ENCODE measurements at regions of chr4 and their contacts with region 1.

Region 1: DNA sequence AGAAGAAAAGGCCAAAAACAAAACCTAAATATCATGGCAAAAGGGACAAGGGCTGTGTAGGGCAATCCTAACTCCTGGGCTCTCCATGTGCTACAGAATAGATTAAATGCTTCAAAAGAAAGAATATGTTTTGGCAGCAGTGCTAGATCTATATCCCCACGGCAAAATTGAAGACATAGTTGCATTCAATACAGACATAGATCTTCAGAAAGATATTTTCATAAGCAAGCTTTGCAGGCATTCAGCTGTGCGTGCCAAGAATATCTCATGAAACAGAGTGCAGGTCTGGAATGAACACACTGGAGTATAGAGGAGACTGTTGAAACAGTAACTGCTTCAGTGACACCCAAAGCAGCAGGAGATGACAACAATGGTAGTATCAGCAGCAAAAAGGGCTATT is 1476.9 kb downstream of the ARAP2 start:
- DNase-seq: no peak
- ATAC-seq: no peak
- H3K4me3 ChIP-seq: no peak overlapping the region
- H3K27ac ChIP-seq: no peak overlapping the region
- H3K4me1 ChIP-seq: no peaks in the 10 kb centered on the region; the same call in 1 of the 2 replicates
- H3K27me3 ChIP-seq: no peaks in the 10 kb centered on the region
- CTCF ChIP-seq: no peak

Region 2: GRCh38 chr4:34814266-34814665 is 46.9 kb after region 1 on chr4:
- CTCF ChIA-PET with region 1: no interaction called
- POLR2A ChIA-PET with region 1: no interaction called
- intact Hi-C with region 1: no loop called
- DNase-seq: peak; percentile 12
- ATAC-seq: no peak
- H3K4me3 ChIP-seq: no peak overlapping the region
- H3K27ac ChIP-seq: no peak overlapping the region
- H3K4me1 ChIP-seq: peaks cover 5% of the 10 kb centered on the region; the same call in 1 of the 2 replicates
- H3K27me3 ChIP-seq: no peaks in the 10 kb centered on the region
- CTCF ChIP-seq: no peak

Region 3: DNA sequence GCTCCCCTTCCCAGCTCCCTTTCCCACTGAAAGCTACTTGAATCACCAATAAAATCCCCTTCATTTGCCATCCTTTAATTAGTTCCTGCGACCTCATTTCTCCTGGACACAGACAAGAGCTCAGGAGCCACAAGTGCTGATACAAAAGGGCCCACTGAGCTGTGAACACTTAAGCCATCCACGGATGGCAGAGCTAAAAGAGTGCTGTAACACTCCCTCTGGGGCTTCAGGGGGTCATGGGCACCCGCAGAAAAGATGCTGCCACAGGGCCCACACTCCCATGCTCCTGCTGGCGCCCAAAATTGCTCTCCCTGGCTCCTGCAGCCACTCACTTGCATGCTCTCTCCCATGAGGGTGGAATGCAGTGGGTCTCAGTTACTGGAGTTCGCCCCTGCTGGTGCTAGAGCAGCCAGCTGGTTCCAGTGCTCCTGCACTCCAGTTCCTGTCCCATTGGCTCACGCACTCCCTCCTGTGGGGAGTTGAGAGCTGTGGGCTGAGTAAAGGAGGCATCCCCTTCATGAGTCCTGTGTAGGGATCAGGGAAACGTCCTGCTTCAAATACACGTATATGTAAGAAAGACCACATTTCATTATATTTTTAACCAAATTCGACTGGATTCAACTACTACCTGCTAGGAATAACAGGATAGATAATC is 185.9 kb after region 1 on chr4:
- CTCF ChIA-PET with region 1: no interaction called
- POLR2A ChIA-PET with region 1: no interaction called
- intact Hi-C with region 1: loop called (anchors 10 kb)
- DNase-seq: peak; percentile 74
- ATAC-seq: peak; percentile 74
- H3K4me3 ChIP-seq: no peak overlapping the region
- H3K27ac ChIP-seq: no peak overlapping the region
- H3K4me1 ChIP-seq: no peaks in the 10 kb centered on the region
- H3K27me3 ChIP-seq: no peaks in the 10 kb centered on the region
- CTCF ChIP-seq: peak; percentile 67

Region 4: GRCh38 chr4:35151816-35152572 is 384.6 kb after region 1 on chr4:
- CTCF ChIA-PET with region 1: no interaction called
- POLR2A ChIA-PET with region 1: no interaction called
- intact Hi-C with region 1: loop called (anchors 1 kb)
- DNase-seq: peak; percentile 67
- ATAC-seq: peak; percentile 58; the same call in 1 of the 2 replicates
- H3K4me3 ChIP-seq: no peak overlapping the region
- H3K27ac ChIP-seq: no peak overlapping the region
- H3K4me1 ChIP-seq: no peaks in the 10 kb centered on the region
- H3K27me3 ChIP-seq: no peaks in the 10 kb centered on the region
- CTCF ChIP-seq: peak; percentile 67